Activated CD4-positive, alpha-beta memory T cell treated with anti-CD3 and anti-CD28 coated beads, Interleukin-2, amount 10 ng/mL, durations not matched to agents 7 days and 5 days (primary cell): ENCODE measurements at regions of chr6 and their contacts with region 1.

Region 1: DNA sequence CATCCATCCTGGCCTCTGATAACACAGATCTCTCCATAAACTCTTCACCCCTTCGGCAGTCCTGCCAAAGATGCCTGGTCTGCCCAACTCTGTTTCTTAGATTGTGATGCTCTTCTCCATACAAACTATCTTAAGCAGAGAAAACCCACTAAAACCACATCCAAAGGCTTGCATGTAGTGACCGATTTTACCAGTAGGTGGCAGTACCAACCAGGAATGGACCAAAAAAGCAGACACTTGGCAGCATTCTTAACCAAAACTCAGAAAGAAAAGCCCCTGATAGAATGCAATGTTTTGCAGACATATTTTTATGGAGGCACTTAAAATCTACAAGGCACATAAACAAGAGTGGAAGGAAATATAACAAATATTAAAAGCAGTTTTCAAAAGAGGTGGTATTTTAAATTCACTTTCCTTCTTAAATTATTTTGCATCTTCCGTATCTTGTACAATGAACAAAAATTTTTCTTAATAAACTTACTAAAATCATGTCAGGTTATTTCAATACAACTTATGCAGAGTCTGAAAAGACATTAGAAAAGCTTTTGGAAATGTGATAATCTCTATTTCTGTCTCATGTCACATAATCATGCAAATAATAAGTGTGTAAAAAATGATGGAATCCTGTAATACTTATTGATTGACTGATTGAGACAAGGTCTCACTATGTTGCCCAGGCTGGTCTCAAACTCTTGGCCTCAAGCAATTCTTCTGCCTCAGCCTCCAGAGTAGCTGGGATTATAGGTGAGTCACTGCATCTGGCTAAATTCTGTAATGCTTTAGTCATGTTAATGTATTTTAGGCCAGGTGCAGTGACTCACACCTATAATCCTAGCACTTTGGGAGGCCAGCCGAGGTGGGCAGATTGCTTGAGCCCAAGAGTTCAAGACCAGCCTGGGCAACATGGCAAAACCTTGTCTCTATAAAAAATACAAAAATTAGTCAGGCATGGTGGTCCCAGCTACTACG is 29.4 kb downstream of the LRP11 start:
- DNase-seq: peak; percentile 75
- H3K4me3 Mint-ChIP-seq: no peak overlapping the region
- H3K27ac Mint-ChIP-seq: no peak overlapping the region
- H3K4me1 Mint-ChIP-seq: peaks cover 1% of the 10 kb centered on the region
- H3K27me3 Mint-ChIP-seq: peaks cover 2% of the 10 kb centered on the region

Region 2: DNA sequence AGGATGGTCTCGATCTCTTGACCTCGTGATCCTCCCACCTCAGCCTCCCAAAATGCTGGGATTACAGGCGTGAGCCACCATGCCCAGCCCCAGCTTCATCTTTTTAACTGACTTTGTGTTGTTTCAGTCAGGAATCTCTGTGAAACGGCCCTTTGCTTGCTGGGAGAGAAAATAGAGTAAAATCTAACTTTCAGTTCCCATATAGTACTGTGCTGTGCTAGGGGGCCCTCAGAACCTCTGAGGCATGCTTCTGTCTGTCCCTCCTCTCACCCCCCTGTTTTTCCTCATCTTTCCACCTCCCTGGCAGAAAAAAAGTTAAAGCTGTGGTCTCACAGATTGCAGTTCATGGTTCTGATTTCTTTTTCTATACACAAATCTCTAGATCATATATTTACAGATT is 19.0 kb before region 1 on chr6:
- CTCF ChIA-PET with region 1: interaction called, 10 read pairs
- POLR2A ChIA-PET with region 1: no interaction called
- DNase-seq: no peak
- H3K4me3 Mint-ChIP-seq: no peak overlapping the region
- H3K27ac Mint-ChIP-seq: no peak overlapping the region
- H3K4me1 Mint-ChIP-seq: peaks cover 2% of the 10 kb centered on the region
- H3K27me3 Mint-ChIP-seq: no peaks in the 10 kb centered on the region

Region 3: GRCh38 chr6:149925974-149926777 is 91.4 kb after region 1 on chr6:
- CTCF ChIA-PET with region 1: interaction called, 18 read pairs
- POLR2A ChIA-PET with region 1: no interaction called
- DNase-seq: peak; percentile 86
- H3K4me3 Mint-ChIP-seq: peak overlapping the region; percentile 40
- H3K27ac Mint-ChIP-seq: no peak overlapping the region
- H3K4me1 Mint-ChIP-seq: peaks cover 35% of the 10 kb centered on the region
- H3K27me3 Mint-ChIP-seq: peaks cover 85% of the 10 kb centered on the region